Spleen (tissue), 13 donors: ENCODE measurements at regions of chr15 and their contacts with region 1.

Region 1: GRCh38 chr15:51380999-51381795 is 39.7 kb downstream of the GLDN start:
- DNase-seq: no peak
- H3K4me3 ChIP-seq: no peak overlapping the region
- H3K27ac ChIP-seq: no peak overlapping the region
- H3K4me1 ChIP-seq: peaks cover 0 to 10% (median 3%) of the 10 kb centered on the region in 6 donors
- H3K27me3 ChIP-seq: peaks cover 0 to 33% (median 4%) of the 10 kb centered on the region in 7 donors
- CTCF ChIP-seq: peak; percentile 60 to 97 (median 82)
- POLR2A ChIP-seq: no peak

Region 2: DNA sequence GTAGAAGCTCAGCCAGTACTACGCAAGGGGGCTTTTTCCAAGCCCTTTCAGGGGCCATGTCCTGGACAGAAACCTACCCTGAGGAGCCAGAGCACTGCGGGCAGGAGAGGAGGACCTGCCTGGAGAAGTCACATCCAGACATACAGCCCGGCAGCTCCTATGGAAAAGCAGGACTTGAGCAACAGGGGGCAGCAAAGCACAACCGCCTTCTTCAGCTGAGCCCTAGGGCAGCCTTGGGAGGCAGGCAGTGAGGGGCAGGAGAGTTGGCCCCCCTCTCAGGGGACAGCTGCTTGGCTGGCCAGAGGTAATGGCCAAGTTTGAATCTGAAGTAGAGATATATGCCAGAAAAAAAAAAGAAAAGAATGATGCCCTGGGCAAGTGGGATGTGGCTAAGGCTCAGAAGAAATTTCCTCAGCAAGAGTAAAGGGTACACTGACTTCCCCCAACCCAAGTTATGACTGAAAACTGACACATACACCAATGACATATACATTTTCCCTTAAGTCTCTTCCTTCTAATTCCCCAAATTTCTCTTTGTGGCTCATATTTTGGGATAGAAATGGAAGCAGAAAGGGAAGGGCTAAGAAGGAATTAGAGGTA is 99.7 kb before region 1 on chr15:
- intact Hi-C with region 1: loop called (anchors 10 kb)
- DNase-seq: no peak
- H3K4me3 ChIP-seq: no peak overlapping the region
- H3K27ac ChIP-seq: peak overlapping the region in 2 of 8 donors; percentile 13 to 53
- H3K4me1 ChIP-seq: peaks cover 0 to 29% (median 10%) of the 10 kb centered on the region in 6 donors
- H3K27me3 ChIP-seq: peaks cover 0 to 5% (median 0%) of the 10 kb centered on the region in 7 donors
- CTCF ChIP-seq: peak in 9 of 11 experiments; percentile 21 to 68 (median 49)
- POLR2A ChIP-seq: no peak